IMR-90 (cell line): ENCODE measurements at regions of chr2 and their contacts with region 1.

Region 1: GRCh38 chr2:11411768-11412448 is 54.1 kb downstream of the E2F6 start:
- DNase-seq: peak; percentile 63
- ATAC-seq: peak; percentile 54
- H3K4me3 ChIP-seq: peak overlapping the region; percentile 37; the same call in 1 of the 2 replicates
- H3K27ac ChIP-seq: no peak overlapping the region
- H3K4me1 ChIP-seq: peaks cover 5% of the 10 kb centered on the region
- H3K27me3 ChIP-seq: no peaks in the 10 kb centered on the region
- CTCF ChIP-seq: peak; percentile 91
- POLR2A ChIP-seq: no peak
- RAD21 ChIP-seq: peak; percentile 92

Region 2: GRCh38 chr2:11056614-11057013 is 355.3 kb before region 1 on chr2:
- CTCF ChIA-PET with region 1: no interaction called
- POLR2A ChIA-PET with region 1: no interaction called
- dilution Hi-C with region 1: no loop called
- in situ Hi-C with region 1: no loop called
- intact Hi-C with region 1: no loop called
- DNase-seq: peak; percentile 94
- ATAC-seq: peak; percentile 95
- H3K4me3 ChIP-seq: no peak overlapping the region
- H3K27ac ChIP-seq: no peak overlapping the region
- H3K4me1 ChIP-seq: no peaks in the 10 kb centered on the region; the same call in 1 of the 2 replicates
- H3K27me3 ChIP-seq: no peaks in the 10 kb centered on the region; the same call in 1 of the 2 replicates
- CTCF ChIP-seq: no peak
- POLR2A ChIP-seq: no peak
- RAD21 ChIP-seq: 0 out of 2 replicates have a peak, but pooled peaks have one; percentile 17

Region 3: GRCh38 chr2:11234309-11234708 is 177.6 kb before region 1 on chr2:
- CTCF ChIA-PET with region 1: interaction called, 7 read pairs
- POLR2A ChIA-PET with region 1: no interaction called
- dilution Hi-C with region 1: no loop called
- in situ Hi-C with region 1: loop called (anchors 5 kb)
- intact Hi-C with region 1: loop called (anchors 1 kb)
- DNase-seq: peak; percentile 28
- ATAC-seq: peak; percentile 62
- H3K4me3 ChIP-seq: no peak overlapping the region
- H3K27ac ChIP-seq: no peak overlapping the region
- H3K4me1 ChIP-seq: no peaks in the 10 kb centered on the region
- H3K27me3 ChIP-seq: no peaks in the 10 kb centered on the region
- CTCF ChIP-seq: peak; percentile 62
- POLR2A ChIP-seq: no peak
- RAD21 ChIP-seq: peak; percentile 71

Region 4: DNA sequence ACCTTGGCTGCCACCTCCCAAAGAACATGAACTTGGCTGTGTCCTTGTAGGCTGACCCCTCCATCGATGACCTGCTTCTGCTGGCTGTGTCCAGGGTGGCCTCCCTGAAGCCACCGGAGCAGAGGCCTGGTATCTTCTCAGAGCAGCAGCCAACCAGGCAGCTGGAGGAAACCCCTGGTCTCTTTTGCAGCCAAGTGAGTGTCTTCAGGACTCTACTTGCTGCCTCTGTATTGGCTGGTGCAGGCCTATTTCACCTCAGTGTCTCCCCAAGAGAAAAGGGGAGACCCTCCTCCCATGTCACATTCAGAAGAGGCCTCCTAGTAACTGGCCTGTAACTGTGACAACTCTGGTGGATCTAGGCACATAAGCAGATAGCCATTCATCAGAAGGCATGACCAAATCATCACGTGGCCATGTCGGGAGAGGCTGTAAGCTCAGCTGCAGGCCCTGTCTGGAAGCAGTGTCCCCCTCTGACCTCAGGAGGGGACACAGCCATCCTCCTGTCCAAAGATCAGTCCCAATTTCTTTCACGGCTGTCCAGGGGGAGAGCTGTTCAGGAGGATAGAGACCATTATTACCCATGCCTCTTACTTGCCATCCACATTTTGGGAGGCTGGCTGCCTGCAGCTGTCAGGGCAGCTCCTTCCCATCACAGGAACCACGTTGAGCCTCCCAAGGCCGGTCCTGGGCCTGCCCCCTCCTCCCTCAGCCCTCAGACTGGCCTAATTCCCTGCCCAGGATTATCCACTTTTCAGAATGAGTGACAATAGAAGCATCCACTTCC is 46.6 kb before region 1 on chr2:
- CTCF ChIA-PET with region 1: no interaction called
- POLR2A ChIA-PET with region 1: no interaction called
- dilution Hi-C with region 1: no loop called
- in situ Hi-C with region 1: no loop called
- intact Hi-C with region 1: no loop called
- DNase-seq: no peak
- ATAC-seq: no peak
- H3K4me3 ChIP-seq: no peak overlapping the region
- H3K27ac ChIP-seq: no peak overlapping the region
- H3K4me1 ChIP-seq: peaks cover 12% of the 10 kb centered on the region
- H3K27me3 ChIP-seq: no peaks in the 10 kb centered on the region
- CTCF ChIP-seq: no peak
- POLR2A ChIP-seq: no peak
- RAD21 ChIP-seq: no peak

Region 5: GRCh38 chr2:11377928-11378545 is 33.9 kb before region 1 on chr2:
- CTCF ChIA-PET with region 1: interaction called, 4 read pairs
- POLR2A ChIA-PET with region 1: no interaction called
- dilution Hi-C with region 1: no loop called
- in situ Hi-C with region 1: no loop called
- intact Hi-C with region 1: loop called (anchors 2 kb)
- DNase-seq: peak; percentile 79
- ATAC-seq: peak; percentile 8; the same call in 1 of the 2 replicates
- H3K4me3 ChIP-seq: peak overlapping the region; percentile 11; the same call in 1 of the 2 replicates
- H3K27ac ChIP-seq: peak overlapping the region; percentile 68
- H3K4me1 ChIP-seq: peaks cover 35% of the 10 kb centered on the region
- H3K27me3 ChIP-seq: no peaks in the 10 kb centered on the region
- CTCF ChIP-seq: no peak
- POLR2A ChIP-seq: peak; percentile 39; the same call in 1 of the 2 replicates
- RAD21 ChIP-seq: no peak